OCI-LY7 (cell line): ENCODE measurements at regions of chr4 and their contacts with region 1.

Region 1: GRCh38 chr4:184474263-184475095 is at the start of gene IRF2:
- DNase-seq: peak; percentile 97
- H3K4me3 ChIP-seq: peak within 1 kb of the TSS; percentile 89
- H3K27ac ChIP-seq: peak within 1 kb of the TSS; percentile 89
- H3K4me1 ChIP-seq: peaks cover 55% of the 10 kb centered on the region
- CTCF ChIP-seq: no peak; the same call in 1 of the 2 replicates
- total RNA-seq, gene IRF2: 29.7 and 32.3 TPM in 2 replicates

Region 2: DNA sequence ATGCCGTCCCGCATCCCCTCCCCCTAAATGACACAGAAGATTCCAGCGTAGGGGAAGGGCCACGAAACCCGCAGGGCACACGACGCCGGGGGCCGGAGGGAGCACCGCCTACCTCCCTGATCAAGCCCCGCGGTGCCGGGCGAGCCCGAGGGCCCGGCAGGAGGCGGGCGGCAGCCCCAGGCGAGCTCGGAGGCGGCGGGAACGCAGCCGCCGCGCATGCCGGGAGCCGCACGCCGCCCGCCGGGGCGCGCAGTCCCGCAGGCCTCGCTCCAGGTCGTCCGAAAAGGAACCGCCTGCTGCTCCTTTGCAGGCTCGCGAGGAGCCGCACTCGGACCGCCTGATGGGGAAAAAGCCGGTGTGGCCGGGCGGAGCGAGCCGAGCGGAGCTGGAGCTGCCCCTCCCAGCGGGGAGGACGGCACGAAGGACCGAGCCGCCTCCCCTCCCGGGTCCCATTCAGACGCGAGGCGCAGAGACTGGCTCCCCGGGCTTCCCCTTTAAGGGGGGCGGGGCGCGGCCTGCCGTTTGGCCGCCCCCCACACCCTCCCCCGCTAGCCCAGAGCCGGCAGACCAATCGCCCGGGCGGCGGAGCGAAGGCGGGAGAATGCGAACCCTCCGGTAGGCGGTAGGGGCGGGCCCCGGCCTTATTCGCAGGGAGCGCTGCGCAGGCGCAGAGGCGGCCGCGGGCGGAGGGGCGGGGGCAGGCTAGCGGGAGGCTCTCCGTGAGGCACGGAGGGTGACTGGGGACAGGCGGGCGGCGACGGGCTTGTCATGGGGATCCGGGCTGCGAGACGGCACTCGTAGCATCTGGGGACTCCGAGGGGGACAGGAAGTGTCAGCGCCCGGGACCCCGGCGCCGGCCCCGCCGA is 970.2 kb before region 1 on chr4:
- CTCF ChIA-PET with region 1: no interaction called
- POLR2A ChIA-PET with region 1: no interaction called
- intact Hi-C with region 1: loop called (anchors 10 kb)
- DNase-seq: peak; percentile 98
- H3K4me3 ChIP-seq: peak overlapping the region; percentile 100
- H3K27ac ChIP-seq: peak overlapping the region; percentile 89
- H3K4me1 ChIP-seq: peaks cover 23% of the 10 kb centered on the region
- CTCF ChIP-seq: no peak

Region 3: DNA sequence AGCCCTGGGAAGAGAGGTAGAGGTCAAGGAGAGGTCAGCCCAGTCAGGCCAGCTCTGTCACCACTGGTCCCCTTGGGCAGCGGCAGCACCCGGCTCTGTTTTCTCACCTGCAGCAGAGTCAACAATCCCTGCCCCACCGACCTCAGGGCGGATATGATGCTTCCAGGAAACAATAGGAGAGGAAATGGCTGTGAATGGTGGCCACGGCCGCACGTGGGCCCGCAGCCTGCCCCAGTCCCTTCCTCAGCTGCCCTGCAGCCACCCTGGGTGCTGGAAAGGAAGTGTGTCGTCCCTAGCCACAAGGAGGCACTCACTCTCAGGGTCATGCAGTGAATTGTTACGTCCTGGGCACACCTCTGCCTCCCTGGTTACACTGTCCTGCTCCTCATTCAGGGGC is 164.3 kb before region 1 on chr4:
- CTCF ChIA-PET with region 1: no interaction called
- POLR2A ChIA-PET with region 1: interaction called, 3 read pairs
- intact Hi-C with region 1: loop called (anchors 5 kb)
- DNase-seq: peak; percentile 73
- H3K4me3 ChIP-seq: no peak overlapping the region
- H3K27ac ChIP-seq: no peak overlapping the region
- H3K4me1 ChIP-seq: peaks cover 56% of the 10 kb centered on the region
- CTCF ChIP-seq: peak; percentile 76

Region 4: DNA sequence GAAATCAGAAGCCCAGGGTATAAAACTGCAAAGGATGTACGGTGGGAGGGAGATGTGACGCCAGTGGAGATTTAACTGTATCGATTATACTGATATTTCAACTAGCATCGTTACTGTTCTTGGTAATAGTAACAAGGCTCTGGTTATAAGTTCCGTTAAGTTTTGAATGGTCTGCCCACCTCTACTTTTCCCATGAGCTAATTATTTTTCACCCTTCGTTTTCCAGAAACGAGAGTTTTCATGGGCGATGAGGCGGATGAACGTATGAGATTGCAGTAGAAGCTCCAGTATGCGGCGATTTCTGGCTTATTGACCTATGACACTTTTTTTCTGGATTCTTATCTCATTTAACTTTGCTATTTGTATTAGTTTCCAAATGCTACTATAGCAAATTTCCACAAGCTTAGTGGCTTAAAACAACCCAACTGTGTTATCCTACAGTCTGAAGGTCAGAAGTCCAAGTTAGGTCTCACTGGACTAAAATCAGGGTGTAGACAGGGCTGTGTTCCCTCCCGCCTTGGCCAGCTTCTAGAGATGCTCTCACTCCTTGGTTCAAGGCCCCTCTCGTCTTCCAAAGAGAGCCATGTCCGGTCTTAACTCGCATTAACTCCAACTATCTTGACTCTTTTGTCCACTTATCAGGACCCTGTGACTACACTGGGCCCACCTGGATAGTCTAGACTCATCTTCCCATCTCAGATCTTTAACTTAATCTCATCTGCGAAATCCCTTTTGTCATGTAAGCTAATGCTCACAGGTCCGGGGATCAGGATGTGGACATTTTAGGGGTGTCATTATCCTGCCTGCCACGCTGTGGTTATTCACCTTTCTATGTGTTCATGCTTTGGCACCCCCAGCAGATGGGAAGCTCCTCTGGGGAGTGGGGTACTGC is 122.7 kb before region 1 on chr4:
- CTCF ChIA-PET with region 1: interaction called, 4 read pairs
- POLR2A ChIA-PET with region 1: interaction called, 7 read pairs
- intact Hi-C with region 1: loop called (anchors 2 kb)
- DNase-seq: no peak
- H3K4me3 ChIP-seq: no peak overlapping the region
- H3K27ac ChIP-seq: no peak overlapping the region
- H3K4me1 ChIP-seq: peaks cover 69% of the 10 kb centered on the region
- CTCF ChIP-seq: no peak

Region 5: DNA sequence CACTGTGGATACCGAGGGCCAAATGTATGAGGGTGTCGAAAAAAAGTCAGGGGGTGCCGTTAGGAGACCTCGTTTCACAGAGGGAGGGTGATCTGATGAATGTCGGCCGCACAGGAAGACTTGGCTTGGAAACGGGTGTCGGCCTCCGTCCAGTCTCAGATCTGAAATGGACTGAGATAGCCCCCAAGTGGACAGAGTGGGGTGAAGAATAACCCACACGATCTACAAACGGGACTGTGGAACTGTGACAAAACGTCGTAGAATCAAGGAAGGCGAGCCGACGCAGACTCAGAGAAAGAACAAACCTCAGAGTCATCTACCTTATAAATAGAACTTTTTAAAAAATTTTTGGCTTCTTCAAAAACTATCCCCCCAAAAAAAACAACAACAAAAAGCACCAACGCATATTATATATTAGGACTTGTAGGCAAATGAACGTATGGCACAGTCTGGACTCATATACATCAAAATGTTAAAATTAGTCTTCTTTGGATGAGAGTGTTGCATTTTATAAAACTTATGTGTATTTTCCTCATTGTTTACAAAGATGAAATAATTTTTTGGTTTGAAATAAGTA is 63.6 kb after region 1 on chr4:
- CTCF ChIA-PET with region 1: no interaction called
- POLR2A ChIA-PET with region 1: interaction called, 21 read pairs
- intact Hi-C with region 1: loop called (anchors 1 kb)
- DNase-seq: peak; percentile 93
- H3K4me3 ChIP-seq: peak overlapping the region; percentile 76
- H3K27ac ChIP-seq: peak overlapping the region; percentile 82
- H3K4me1 ChIP-seq: peaks cover 45% of the 10 kb centered on the region
- CTCF ChIP-seq: peak; percentile 89

Region 6: DNA sequence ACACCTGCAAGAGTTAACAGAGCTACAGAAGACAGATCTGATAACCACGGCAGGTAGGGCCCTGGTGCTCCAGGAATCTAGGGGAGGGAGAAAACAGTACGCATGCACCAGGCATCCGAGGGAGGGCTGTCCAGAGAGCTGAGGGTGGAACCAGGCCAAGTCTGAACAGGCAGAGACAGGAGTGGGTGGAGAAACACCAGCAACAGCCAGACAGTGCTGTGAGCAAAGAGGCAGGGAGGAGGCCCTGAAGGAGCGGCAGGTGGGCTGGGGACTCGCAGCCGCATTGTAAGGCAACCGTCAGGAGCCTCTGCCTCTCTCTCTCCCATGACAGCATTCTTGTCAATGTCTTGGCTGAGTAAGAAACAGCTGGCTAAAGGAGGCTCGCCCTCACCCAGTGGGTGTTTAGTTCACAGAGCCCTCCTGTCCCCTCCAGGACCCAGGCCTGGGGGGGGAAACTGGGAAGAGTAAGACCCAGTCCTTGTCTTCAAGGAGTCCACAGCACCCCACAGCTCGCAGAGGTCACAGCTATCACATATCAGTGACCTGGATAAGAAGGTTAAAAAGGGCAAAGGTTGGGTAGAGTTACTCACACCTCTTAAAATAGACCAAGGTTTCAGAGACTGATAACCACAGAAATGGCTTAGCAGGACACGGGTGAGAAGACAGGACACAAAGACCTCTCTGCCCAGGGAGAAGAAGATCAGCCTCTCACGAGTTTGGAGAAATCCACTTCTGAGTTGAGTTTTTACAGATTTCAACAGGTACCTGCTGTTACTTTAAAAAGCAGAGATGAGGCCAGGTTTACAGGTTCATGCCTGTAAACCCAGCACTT is 340.8 kb after region 1 on chr4:
- CTCF ChIA-PET with region 1: no interaction called
- POLR2A ChIA-PET with region 1: no interaction called
- intact Hi-C with region 1: loop called (anchors 5 kb)
- DNase-seq: peak; percentile 76
- H3K4me3 ChIP-seq: peak overlapping the region; percentile 49
- H3K27ac ChIP-seq: peak overlapping the region; percentile 84
- H3K4me1 ChIP-seq: peaks cover 68% of the 10 kb centered on the region
- CTCF ChIP-seq: no peak